Activated B cell treated with CpG ODN at 0.5 μM for 24 hours (primary cell): ENCODE measurements at regions of chr10 and their contacts with region 1.

Region 1: GRCh38 chr10:110354322-110354766 is 49.6 kb upstream of the SMNDC1 start:
- DNase-seq: peak; percentile 60
- ATAC-seq: peak; percentile 5
- H3K4me3 Mint-ChIP-seq: peak overlapping the region; percentile 33
- H3K27ac Mint-ChIP-seq: peak overlapping the region; percentile 99
- H3K4me1 Mint-ChIP-seq: peaks cover 72% of the 10 kb centered on the region
- H3K27me3 Mint-ChIP-seq: no peaks in the 10 kb centered on the region
- CTCF ChIP-seq: no peak

Region 2: GRCh38 chr10:110137142-110137545 is 217.2 kb before region 1 on chr10:
- CTCF ChIA-PET with region 1: no interaction called
- POLR2A ChIA-PET with region 1: no interaction called
- intact Hi-C with region 1: loop called (anchors 1 kb)
- DNase-seq: no peak
- ATAC-seq: peak; percentile 66
- H3K4me3 Mint-ChIP-seq: no peak overlapping the region
- H3K27ac Mint-ChIP-seq: peak overlapping the region; percentile 68
- H3K4me1 Mint-ChIP-seq: peaks cover 35% of the 10 kb centered on the region
- H3K27me3 Mint-ChIP-seq: no peaks in the 10 kb centered on the region
- CTCF ChIP-seq: no peak

Region 3: GRCh38 chr10:110326351-110327032 is 27.9 kb before region 1 on chr10:
- CTCF ChIA-PET with region 1: interaction called, 46 read pairs
- POLR2A ChIA-PET with region 1: interaction called, 218 read pairs
- intact Hi-C with region 1: loop called (anchors 1 kb)
- DNase-seq: no peak
- ATAC-seq: peak; percentile 8
- H3K4me3 Mint-ChIP-seq: peak overlapping the region; percentile 4
- H3K27ac Mint-ChIP-seq: peak overlapping the region; percentile 92
- H3K4me1 Mint-ChIP-seq: peaks cover 49% of the 10 kb centered on the region
- H3K27me3 Mint-ChIP-seq: no peaks in the 10 kb centered on the region
- CTCF ChIP-seq: no peak

Region 4: GRCh38 chr10:110395725-110396651 is 41.6 kb after region 1 on chr10:
- CTCF ChIA-PET with region 1: no interaction called
- POLR2A ChIA-PET with region 1: interaction called, 6 read pairs
- intact Hi-C with region 1: loop called (anchors 1 kb)
- DNase-seq: no peak
- ATAC-seq: peak; percentile 72
- H3K4me3 Mint-ChIP-seq: no peak overlapping the region
- H3K27ac Mint-ChIP-seq: no peak overlapping the region
- H3K4me1 Mint-ChIP-seq: peaks cover 10% of the 10 kb centered on the region
- H3K27me3 Mint-ChIP-seq: peaks cover 11% of the 10 kb centered on the region
- CTCF ChIP-seq: no peak

Region 5: GRCh38 chr10:110483633-110484032 is 129.3 kb after region 1 on chr10:
- CTCF ChIA-PET with region 1: interaction called, 3 read pairs
- POLR2A ChIA-PET with region 1: interaction called, 11 read pairs
- intact Hi-C with region 1: no loop called
- DNase-seq: no peak
- ATAC-seq: no peak
- H3K4me3 Mint-ChIP-seq: no peak overlapping the region
- H3K27ac Mint-ChIP-seq: no peak overlapping the region
- H3K4me1 Mint-ChIP-seq: no peaks in the 10 kb centered on the region
- H3K27me3 Mint-ChIP-seq: peaks cover 22% of the 10 kb centered on the region
- CTCF ChIP-seq: no peak

Region 6: DNA sequence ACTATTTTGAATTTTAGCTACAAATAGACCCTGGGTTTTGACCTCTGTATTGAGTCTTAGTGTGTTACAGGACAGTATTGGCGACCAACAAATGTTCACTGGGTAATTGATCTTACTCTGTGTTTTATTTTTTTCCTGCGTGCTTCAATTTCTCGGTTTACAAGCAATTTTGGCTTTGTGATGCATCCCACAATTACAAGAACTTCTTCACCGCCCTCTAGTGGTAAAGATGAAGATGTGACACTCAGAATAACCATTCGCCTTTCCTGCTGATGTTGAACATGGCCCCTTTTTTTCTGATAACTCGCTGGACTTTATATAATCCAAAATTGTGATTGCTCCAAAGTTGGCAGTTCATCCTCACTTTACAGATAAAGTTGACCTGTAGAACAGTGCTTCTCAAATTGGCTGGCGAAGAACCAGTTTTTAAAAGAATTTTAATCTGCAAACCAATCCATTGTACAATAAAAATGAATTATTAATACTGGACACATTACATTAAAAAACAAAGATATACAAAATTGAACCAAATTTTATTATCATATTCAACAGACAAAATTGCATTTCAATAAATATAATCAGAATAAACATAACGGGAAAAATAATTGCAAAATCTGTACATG is 192.9 kb after region 1 on chr10:
- CTCF ChIA-PET with region 1: interaction called, 69 read pairs
- POLR2A ChIA-PET with region 1: interaction called, 16 read pairs
- intact Hi-C with region 1: loop called (anchors 1 kb)
- DNase-seq: no peak
- ATAC-seq: peak; percentile 67
- H3K4me3 Mint-ChIP-seq: no peak overlapping the region
- H3K27ac Mint-ChIP-seq: no peak overlapping the region
- H3K4me1 Mint-ChIP-seq: peaks cover 6% of the 10 kb centered on the region
- H3K27me3 Mint-ChIP-seq: peaks cover 10% of the 10 kb centered on the region
- CTCF ChIP-seq: no peak

Region 7: GRCh38 chr10:110706690-110707098 is 352.4 kb after region 1 on chr10:
- CTCF ChIA-PET with region 1: no interaction called
- POLR2A ChIA-PET with region 1: no interaction called
- intact Hi-C with region 1: no loop called
- DNase-seq: no peak
- ATAC-seq: no peak
- H3K4me3 Mint-ChIP-seq: no peak overlapping the region
- H3K27ac Mint-ChIP-seq: no peak overlapping the region
- H3K4me1 Mint-ChIP-seq: no peaks in the 10 kb centered on the region
- H3K27me3 Mint-ChIP-seq: peaks cover 17% of the 10 kb centered on the region
- CTCF ChIP-seq: no peak

Region 8: GRCh38 chr10:111004016-111004415 is 649.7 kb after region 1 on chr10:
- CTCF ChIA-PET with region 1: no interaction called
- POLR2A ChIA-PET with region 1: no interaction called
- intact Hi-C with region 1: no loop called
- DNase-seq: no peak
- ATAC-seq: no peak
- H3K4me3 Mint-ChIP-seq: no peak overlapping the region
- H3K27ac Mint-ChIP-seq: no peak overlapping the region
- H3K4me1 Mint-ChIP-seq: peaks cover 2% of the 10 kb centered on the region
- H3K27me3 Mint-ChIP-seq: no peaks in the 10 kb centered on the region
- CTCF ChIP-seq: no peak